AG04450 (cell line): ENCODE measurements at regions of chr14 and their contacts with region 1.

Region 1: GRCh38 chr14:44846232-44846824 is 115.4 kb downstream of the KLHL28 start:
- DNase-seq: peak; percentile 24
- H3K4me3 ChIP-seq: no peak overlapping the region
- H3K27ac ChIP-seq: no peak overlapping the region
- H3K27me3 ChIP-seq: no peaks in the 10 kb centered on the region
- CTCF ChIP-seq: peak; percentile 93

Region 2: GRCh38 chr14:44803239-44803905 is 43.0 kb before region 1 on chr14:
- CTCF ChIA-PET with region 1: interaction called, 12 read pairs
- POLR2A ChIA-PET with region 1: no interaction called
- DNase-seq: no peak
- H3K4me3 ChIP-seq: no peak overlapping the region
- H3K27ac ChIP-seq: no peak overlapping the region
- H3K27me3 ChIP-seq: no peaks in the 10 kb centered on the region
- CTCF ChIP-seq: peak; percentile 72

Region 3: GRCh38 chr14:44820230-44820964 is 25.9 kb before region 1 on chr14:
- CTCF ChIA-PET with region 1: interaction called, 13 read pairs
- POLR2A ChIA-PET with region 1: no interaction called
- DNase-seq: no peak
- H3K4me3 ChIP-seq: no peak overlapping the region
- H3K27ac ChIP-seq: no peak overlapping the region
- H3K27me3 ChIP-seq: no peaks in the 10 kb centered on the region
- CTCF ChIP-seq: no peak

Region 4: GRCh38 chr14:44863271-44863670 is 16.9 kb after region 1 on chr14:
- CTCF ChIA-PET with region 1: interaction called, 13 read pairs
- POLR2A ChIA-PET with region 1: no interaction called
- DNase-seq: no peak
- H3K4me3 ChIP-seq: no peak overlapping the region
- H3K27ac ChIP-seq: no peak overlapping the region
- H3K27me3 ChIP-seq: no peaks in the 10 kb centered on the region
- CTCF ChIP-seq: no peak

Region 5: GRCh38 chr14:45103806-45104205 is 257.5 kb after region 1 on chr14:
- CTCF ChIA-PET with region 1: no interaction called
- POLR2A ChIA-PET with region 1: no interaction called
- DNase-seq: no peak
- H3K4me3 ChIP-seq: no peak overlapping the region
- H3K27ac ChIP-seq: no peak overlapping the region
- H3K27me3 ChIP-seq: no peaks in the 10 kb centered on the region
- CTCF ChIP-seq: no peak